B cell (primary cell): ENCODE measurements at regions of chr16 and their contacts with region 1.

Region 1: GRCh38 chr16:4624015-4624826 is at the start of gene MGRN1:
- DNase-seq: peak; percentile 96
- ATAC-seq: peak; percentile 91
- H3K4me3 ChIP-seq: peak within 1 kb of the TSS; percentile 67 to 90 (median 73)
- H3K4me3 Mint-ChIP-seq: peak within 1 kb of the TSS; percentile 100
- H3K27ac ChIP-seq: peak within 1 kb of the TSS; percentile 77 to 97
- H3K27ac Mint-ChIP-seq: peak within 1 kb of the TSS; percentile 98
- H3K4me1 ChIP-seq: peaks cover 18 to 27% of the 10 kb centered on the region in 2 donors
- H3K4me1 Mint-ChIP-seq: peaks cover 35% of the 10 kb centered on the region
- H3K27me3 ChIP-seq: no peaks in the 10 kb centered on the region
- H3K27me3 Mint-ChIP-seq: no peaks in the 10 kb centered on the region
- CTCF ChIP-seq: peak; percentile 86
- total RNA-seq, gene MGRN1: 89.2 and 89.8 TPM in 2 replicates

Region 2: GRCh38 chr16:4416200-4417032 is 207.8 kb before region 1 on chr16 and contains the start of gene CORO7:
- CTCF ChIA-PET with region 1: no interaction called
- POLR2A ChIA-PET with region 1: no interaction called
- intact Hi-C with region 1: loop called (anchors 1 kb)
- DNase-seq: peak; percentile 99
- ATAC-seq: peak; percentile 90
- H3K4me3 ChIP-seq: peak within 1 kb of the TSS; percentile 62 to 94 (median 78)
- H3K4me3 Mint-ChIP-seq: peak within 1 kb of the TSS; percentile 96
- H3K27ac ChIP-seq: peak within 1 kb of the TSS; percentile 91 to 95
- H3K27ac Mint-ChIP-seq: peak within 1 kb of the TSS; percentile 95
- H3K4me1 ChIP-seq: peaks cover 24 to 35% of the 10 kb centered on the region in 2 donors
- H3K4me1 Mint-ChIP-seq: peaks cover 31% of the 10 kb centered on the region
- H3K27me3 ChIP-seq: no peaks in the 10 kb centered on the region
- H3K27me3 Mint-ChIP-seq: no peaks in the 10 kb centered on the region
- CTCF ChIP-seq: no peak
- total RNA-seq, gene CORO7: 114 and 117 TPM in 2 replicates

Region 3: DNA sequence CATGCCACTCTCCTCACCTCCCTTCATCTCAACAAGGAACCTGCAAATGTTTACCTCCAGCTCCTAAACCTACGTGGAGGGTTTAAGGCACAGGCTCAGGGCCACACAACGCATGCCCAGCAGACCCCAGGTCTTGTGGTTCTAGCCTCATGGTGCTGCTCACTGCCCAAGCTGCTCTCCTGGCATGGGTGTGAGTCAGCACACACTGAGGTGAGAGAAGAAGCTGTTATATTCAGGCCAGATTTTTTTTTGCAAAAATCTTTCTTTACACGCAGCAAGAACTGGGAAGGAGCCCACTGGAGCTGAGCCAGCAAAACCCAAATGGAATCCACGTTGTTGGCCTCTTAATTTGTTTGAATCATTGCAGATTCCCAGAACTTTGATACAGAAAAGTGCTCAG is 73.6 kb before region 1 on chr16:
- CTCF ChIA-PET with region 1: interaction called, 3 read pairs
- POLR2A ChIA-PET with region 1: no interaction called
- intact Hi-C with region 1: loop called (anchors 2 kb)
- DNase-seq: no peak
- ATAC-seq: no peak
- H3K4me3 ChIP-seq: no peak overlapping the region
- H3K4me3 Mint-ChIP-seq: no peak overlapping the region
- H3K27ac ChIP-seq: no peak overlapping the region
- H3K27ac Mint-ChIP-seq: peak overlapping the region; percentile 53
- H3K4me1 ChIP-seq: peaks cover 0 to 9% of the 10 kb centered on the region in 2 donors
- H3K4me1 Mint-ChIP-seq: peaks cover 3% of the 10 kb centered on the region
- H3K27me3 ChIP-seq: no peaks in the 10 kb centered on the region
- H3K27me3 Mint-ChIP-seq: peaks cover 6% of the 10 kb centered on the region
- CTCF ChIP-seq: no peak

Region 4: GRCh38 chr16:4649744-4650442 is 25.7 kb after region 1 on chr16:
- CTCF ChIA-PET with region 1: no interaction called
- POLR2A ChIA-PET with region 1: no interaction called
- intact Hi-C with region 1: loop called (anchors 2 kb)
- DNase-seq: no peak
- ATAC-seq: no peak
- H3K4me3 ChIP-seq: no peak overlapping the region
- H3K4me3 Mint-ChIP-seq: no peak overlapping the region
- H3K27ac ChIP-seq: no peak overlapping the region
- H3K27ac Mint-ChIP-seq: no peak overlapping the region
- H3K4me1 ChIP-seq: peaks cover 0 to 20% of the 10 kb centered on the region in 2 donors
- H3K4me1 Mint-ChIP-seq: peaks cover 23% of the 10 kb centered on the region
- H3K27me3 ChIP-seq: no peaks in the 10 kb centered on the region
- H3K27me3 Mint-ChIP-seq: no peaks in the 10 kb centered on the region
- CTCF ChIP-seq: no peak

Region 5: DNA sequence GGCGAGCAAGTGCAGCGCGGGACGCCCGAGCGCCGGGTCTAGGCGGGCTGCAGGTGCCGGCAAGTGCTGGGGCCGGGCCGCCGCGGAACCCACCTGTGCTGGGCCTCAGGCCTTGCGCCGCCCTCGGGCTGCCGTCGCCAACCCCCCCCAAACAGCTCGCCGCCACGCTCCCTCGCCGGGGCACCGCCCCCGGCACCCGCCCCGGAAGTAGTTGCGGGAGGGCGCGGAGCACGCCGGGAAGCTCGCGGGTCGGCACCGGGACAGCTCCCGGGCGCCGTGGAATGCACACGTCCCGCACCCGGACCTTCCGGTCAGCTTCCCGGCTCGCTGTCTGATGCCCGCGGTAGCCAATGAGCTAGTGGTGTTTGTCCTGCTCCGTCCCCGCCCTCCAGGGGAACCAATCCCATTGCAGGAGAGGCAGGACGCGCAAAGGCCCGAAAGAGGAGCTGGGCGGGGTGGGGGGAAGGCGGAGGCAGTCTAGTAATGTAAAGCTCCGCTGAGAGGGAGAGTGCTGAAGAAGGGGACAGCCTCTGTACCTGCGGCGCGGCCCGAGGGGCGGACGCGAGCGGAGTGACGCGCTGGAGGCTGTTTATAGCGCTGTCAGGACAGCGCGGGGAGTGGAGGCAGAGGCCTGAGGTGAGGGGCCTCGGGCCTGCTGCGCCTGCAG is 110.0 kb after region 1 on chr16 and contains the starts of genes ANKS3 and DNAAF8:
- CTCF ChIA-PET with region 1: interaction called, 7 read pairs
- POLR2A ChIA-PET with region 1: no interaction called
- intact Hi-C with region 1: loop called (anchors 2 kb)
- DNase-seq: peak; percentile 89
- ATAC-seq: peak; percentile 80
- H3K4me3 ChIP-seq: peak within 1 kb of the TSS; percentile 79 to 98 (median 91)
- H3K4me3 Mint-ChIP-seq: peak within 1 kb of the TSS; percentile 90
- H3K27ac ChIP-seq: peak within 1 kb of the TSS; percentile 35 to 89
- H3K27ac Mint-ChIP-seq: peak within 1 kb of the TSS; percentile 89
- H3K4me1 ChIP-seq: peaks cover 10 to 13% of the 10 kb centered on the region in 2 donors
- H3K4me1 Mint-ChIP-seq: peaks cover 17% of the 10 kb centered on the region
- H3K27me3 ChIP-seq: no peaks in the 10 kb centered on the region
- H3K27me3 Mint-ChIP-seq: no peaks in the 10 kb centered on the region
- CTCF ChIP-seq: no peak
- total RNA-seq, gene ANKS3: 31.9 and 36.2 TPM in 2 replicates
- total RNA-seq, gene DNAAF8: 0.19 and 0.44 TPM in 2 replicates